HEK293 (cell line): ENCODE measurements at regions of chr3 and their contacts with region 1.

Region 1: GRCh38 chr3:10772271-10773161 is 43.5 kb upstream of the SLC6A11 start:
- H3K4me3 ChIP-seq: no peak overlapping the region
- H3K27ac ChIP-seq: no peak overlapping the region
- H3K4me1 ChIP-seq: no peaks in the 10 kb centered on the region
- CTCF ChIP-seq: peak; percentile 54

Region 2: DNA sequence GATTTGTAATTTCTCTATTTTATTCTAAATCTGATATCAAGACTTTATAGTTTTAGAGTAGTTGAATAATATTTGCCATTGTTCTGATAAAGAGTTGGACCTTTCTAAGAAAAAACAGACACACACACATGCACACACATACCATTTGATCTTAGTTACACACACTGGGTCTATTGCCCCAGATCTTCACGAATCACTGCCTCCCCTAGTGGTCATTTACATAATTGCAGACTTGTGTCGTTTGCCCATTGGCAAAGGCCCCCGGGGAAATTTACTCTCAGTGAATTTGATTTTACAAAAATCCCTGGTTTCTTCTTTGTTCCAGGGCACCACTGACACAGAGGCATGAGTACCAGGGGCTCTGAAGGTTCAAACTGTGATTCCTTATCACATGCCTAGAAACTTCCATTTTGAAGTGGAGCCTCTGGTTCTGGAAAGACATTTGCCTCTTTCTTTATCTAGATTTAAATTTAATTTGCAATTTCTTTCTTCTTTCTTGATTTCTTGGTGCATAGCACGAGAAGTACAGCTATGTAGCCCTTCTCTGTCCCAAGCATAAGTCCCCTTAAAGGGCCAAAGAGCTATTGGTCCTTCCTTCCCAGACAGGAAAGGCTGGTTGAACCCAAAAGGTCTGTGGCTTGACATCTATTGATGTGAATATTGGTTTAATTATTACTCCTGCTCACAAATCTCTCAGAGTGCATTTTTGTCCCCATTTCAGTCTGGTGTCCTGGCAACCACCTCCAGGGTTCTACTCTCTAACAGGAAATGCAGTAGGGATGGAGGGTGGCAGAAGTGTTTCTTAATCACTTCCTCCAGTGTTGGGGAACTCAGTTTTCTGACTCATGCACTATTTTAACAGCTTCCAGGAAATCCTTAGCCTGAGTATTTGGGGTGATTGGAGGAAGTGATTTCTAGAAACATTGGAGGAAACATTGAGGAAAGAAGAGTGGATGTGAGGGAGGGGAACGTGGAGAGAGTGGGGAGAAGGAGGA is 11.1 kb after region 1 on chr3:
- CTCF ChIA-PET with region 1: interaction called, 30 read pairs
- POLR2A ChIA-PET with region 1: no interaction called
- H3K4me3 ChIP-seq: no peak overlapping the region
- H3K27ac ChIP-seq: no peak overlapping the region
- H3K4me1 ChIP-seq: no peaks in the 10 kb centered on the region
- CTCF ChIP-seq: no peak